ENCODE measurements at regions of chr19 and their contacts with region 1.

Region 1: GRCh38 chr19:49570138-49570856 is 10.1 kb downstream of the NOSIP start:
- DNase-seq: peak in 1 of 2 experiments; percentile 70
- H3K4me3 ChIP-seq: no peak overlapping the region
- H3K27ac ChIP-seq: no peak overlapping the region
- H3K4me1 ChIP-seq: peaks cover 2 to 5% (median 4%) of the 10 kb centered on the region in 4 experiments; a peak in 5 of 7 replicates
- H3K27me3 ChIP-seq: no peaks in the 10 kb centered on the region
- CTCF ChIP-seq: peak; percentile 35 to 99 (median 99)
- EP300 ChIP-seq: no peak
- POLR2A ChIP-seq: no peak
- RAD21 ChIP-seq: peak; percentile 93 to 95

Region 2: DNA sequence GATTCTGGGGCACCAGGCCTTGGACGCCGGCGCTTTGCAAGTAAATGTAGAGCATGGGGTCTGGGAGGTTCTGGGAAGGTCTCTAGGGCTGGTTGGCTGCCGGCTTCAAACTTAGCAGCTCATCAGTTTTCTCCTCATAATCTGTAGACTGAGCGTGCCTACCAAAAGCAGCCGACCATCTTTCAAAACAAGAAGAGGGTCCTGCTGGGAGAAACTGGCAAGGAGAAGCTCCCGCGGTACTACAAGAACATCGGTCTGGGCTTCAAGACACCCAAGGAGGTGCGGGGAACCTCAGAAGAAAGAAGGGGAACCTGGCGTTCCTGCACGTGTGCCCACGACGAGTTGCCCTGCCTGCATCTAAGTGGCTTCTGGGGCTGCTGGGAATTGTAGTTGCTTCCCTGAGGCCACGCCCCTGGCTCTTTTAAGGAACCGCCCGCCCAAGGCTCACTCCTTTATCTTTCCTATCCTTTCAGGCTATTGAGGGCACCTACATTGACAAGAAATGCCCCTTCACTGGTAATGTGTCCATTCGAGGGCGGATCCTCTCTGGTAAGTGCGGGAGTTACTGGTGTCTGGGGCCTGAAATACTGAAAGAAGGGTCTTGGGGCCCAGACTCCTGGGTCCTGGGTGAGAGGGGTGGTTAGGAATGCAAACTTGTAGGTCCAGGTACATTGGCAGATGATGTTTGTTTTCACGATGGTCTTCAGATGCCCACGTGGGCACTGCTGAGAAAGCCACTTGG is 73.1 kb before region 1 on chr19:
- CTCF ChIA-PET with region 1: interaction called, 16 read pairs
- POLR2A ChIA-PET with region 1: interaction called, 22 read pairs
- DNase-seq: no peak
- H3K4me3 ChIP-seq: peak overlapping the region; percentile 91 to 99 (median 98)
- H3K27ac ChIP-seq: peak overlapping the region; percentile 85
- H3K4me1 ChIP-seq: peaks cover 0 to 32% (median 23%) of the 10 kb centered on the region in 4 experiments; a peak in 6 of 7 replicates
- H3K27me3 ChIP-seq: no peaks in the 10 kb centered on the region
- CTCF ChIP-seq: no peak
- EP300 ChIP-seq: no peak
- POLR2A ChIP-seq: peak in 1 of 2 experiments; percentile 77; a peak in 2 of 3 replicates
- RAD21 ChIP-seq: no peak

Region 3: DNA sequence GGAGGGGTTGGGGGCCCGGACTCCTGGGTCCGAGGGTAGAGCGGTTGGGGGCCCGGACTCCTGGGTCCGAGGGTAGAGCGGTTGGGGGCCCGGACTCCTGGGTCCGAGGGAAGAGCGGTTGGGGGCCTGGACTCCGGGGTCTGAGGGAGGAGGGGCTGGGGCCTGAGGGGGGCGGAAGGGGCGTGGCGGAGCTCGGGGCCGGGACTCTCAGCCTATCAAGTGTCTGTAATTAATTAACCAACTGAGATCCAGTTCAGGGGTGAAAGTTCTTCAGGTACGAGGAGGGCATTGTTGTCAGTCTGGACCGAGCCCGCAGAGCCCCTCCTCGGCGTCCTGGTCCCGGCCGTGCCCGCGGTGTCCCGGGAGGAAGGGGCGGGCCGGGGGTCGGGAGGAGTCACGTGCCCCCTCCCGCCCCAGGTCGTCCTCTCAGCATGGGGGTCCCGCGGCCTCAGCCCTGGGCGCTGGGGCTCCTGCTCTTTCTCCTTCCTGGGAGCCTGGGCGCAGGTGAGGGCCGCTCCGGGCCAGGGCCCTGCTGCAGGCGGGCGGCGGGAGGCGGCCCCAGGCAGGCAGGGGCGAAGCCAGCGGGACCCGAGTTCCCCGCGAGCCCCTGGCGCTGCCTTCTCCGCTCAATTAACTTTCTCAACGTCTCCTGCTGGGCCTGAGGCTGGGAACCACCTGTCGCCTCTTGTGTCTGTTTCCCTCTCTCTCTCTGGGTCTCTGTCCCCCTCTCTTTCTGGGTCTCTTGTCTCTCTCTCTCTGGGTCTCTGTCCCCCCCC is 57.1 kb before region 1 on chr19:
- CTCF ChIA-PET with region 1: interaction called, 23 read pairs
- POLR2A ChIA-PET with region 1: interaction called, 4 read pairs
- DNase-seq: peak in 1 of 2 experiments; percentile 81
- H3K4me3 ChIP-seq: peak overlapping the region; percentile 66 to 93 (median 75)
- H3K27ac ChIP-seq: peak overlapping the region; percentile 55; the same call in 1 of the 2 replicates
- H3K4me1 ChIP-seq: peaks cover 0 to 9% (median 8%) of the 10 kb centered on the region in 4 experiments; a peak in 5 of 7 replicates
- H3K27me3 ChIP-seq: no peaks in the 10 kb centered on the region; a peak in 1 of 7 replicates
- CTCF ChIP-seq: no peak
- EP300 ChIP-seq: no peak
- POLR2A ChIP-seq: peak in 1 of 2 experiments; percentile 75; a peak in 2 of 3 replicates
- RAD21 ChIP-seq: no peak

Region 4: DNA sequence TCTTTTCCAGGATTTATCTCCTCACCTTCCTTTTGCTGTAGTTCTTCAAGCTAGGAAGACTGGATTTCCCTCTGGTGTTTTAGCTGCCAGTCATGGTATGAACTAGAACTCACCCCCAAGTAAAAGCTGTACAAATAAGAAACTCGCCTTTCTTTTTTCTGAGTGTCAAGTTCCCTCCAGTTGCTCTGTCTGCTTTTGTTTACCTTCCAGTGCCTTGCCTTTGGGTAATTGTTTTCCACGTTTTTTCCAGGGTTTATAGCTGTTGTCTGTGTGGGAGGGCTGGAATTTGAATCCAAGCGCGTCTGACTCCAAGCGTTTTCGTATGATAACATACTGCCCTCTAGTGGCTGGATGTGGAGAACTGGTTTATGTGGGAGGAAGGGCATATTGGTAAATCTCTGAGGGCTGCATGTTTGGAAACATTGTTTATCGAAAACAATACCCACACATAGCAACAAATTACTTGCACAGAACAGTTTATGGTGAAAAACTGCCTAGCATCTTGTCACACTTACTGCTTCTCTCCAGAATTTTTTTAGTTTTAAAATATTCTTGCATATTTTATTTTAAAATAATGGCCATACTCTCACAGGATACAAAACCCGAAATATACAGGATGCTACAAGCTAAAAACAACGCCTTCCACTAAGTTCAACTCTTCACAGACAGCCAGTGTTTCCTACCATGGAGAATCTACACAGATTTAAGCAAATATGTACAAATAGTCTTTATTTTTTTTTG is 23.3 kb before region 1 on chr19:
- CTCF ChIA-PET with region 1: interaction called, 240 read pairs
- POLR2A ChIA-PET with region 1: interaction called, 6 read pairs
- DNase-seq: peak; percentile 47 to 74
- H3K4me3 ChIP-seq: peak overlapping the region in 1 of 4 experiments; percentile 27; a peak in 1 of 8 replicates
- H3K27ac ChIP-seq: no peak overlapping the region
- H3K4me1 ChIP-seq: no peaks in the 10 kb centered on the region
- H3K27me3 ChIP-seq: no peaks in the 10 kb centered on the region
- CTCF ChIP-seq: peak; percentile 24 to 90 (median 84)
- EP300 ChIP-seq: no peak
- POLR2A ChIP-seq: no peak
- RAD21 ChIP-seq: peak; percentile 88 to 91

Region 5: DNA sequence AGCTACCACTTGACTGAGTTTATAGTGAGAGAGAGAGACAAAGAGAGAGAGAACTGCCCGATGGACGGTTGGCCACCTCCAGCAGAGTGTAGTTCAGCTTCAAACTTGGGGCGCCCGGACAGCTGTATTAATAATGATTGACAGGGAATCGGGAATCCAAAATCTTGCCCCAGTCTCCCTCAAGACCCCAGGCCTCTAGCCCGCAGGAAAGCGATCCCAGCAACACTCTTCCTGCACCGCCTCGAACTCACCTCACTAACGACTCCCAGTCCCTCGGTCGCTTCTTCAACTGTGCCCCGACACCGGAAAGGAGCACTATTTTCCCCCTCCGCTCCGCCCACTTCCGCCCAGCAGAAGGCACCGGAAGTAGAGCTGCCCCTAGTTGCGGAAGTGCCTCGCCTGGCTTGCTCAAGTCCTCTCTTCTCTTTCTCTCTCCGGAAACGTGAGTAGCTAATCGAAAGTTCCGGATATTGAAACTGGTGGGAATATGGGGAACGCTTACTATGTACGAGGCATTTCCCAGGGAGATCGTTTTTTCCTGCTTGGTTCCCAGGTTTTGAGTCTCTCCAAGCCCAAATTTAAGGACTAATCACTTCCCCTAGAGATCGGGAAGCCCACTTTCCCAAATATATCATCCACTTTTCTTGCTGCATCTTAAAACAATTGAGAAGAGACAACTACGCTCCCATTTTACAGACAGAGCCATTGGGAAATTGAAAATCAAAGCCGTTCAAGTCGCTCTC is 10.1 kb after region 1 on chr19 and contains the start of gene NOSIP:
- CTCF ChIA-PET with region 1: interaction called, 55 read pairs
- POLR2A ChIA-PET with region 1: interaction called, 39 read pairs
- DNase-seq: peak; percentile 89 to 95
- H3K4me3 ChIP-seq: peak within 1 kb of the TSS; percentile 87 to 99 (median 92)
- H3K27ac ChIP-seq: peak within 1 kb of the TSS; percentile 51
- H3K4me1 ChIP-seq: peaks cover 2 to 19% (median 8%) of the 10 kb centered on the region in 4 experiments
- H3K27me3 ChIP-seq: no peaks in the 10 kb centered on the region
- CTCF ChIP-seq: no peak
- EP300 ChIP-seq: 0 out of 3 replicates have a peak, but pooled peaks of 1 of the 2 experiments have one; percentile 47
- POLR2A ChIP-seq: peak; percentile 95 to 99
- RAD21 ChIP-seq: no peak
- total RNA-seq, gene NOSIP: 85.1 and 93.8 TPM in 2 replicates

Measured in H1 (cell line).